ENCODE measurements at regions of chr7 and their contacts with region 1.

Region 1: GRCh38 chr7:139645572-139646523 is 122.4 kb downstream of the CLEC2L start:
- DNase-seq: peak; percentile 87
- H3K4me3 Mint-ChIP-seq: no peak overlapping the region
- H3K27ac Mint-ChIP-seq: no peak overlapping the region
- H3K4me1 Mint-ChIP-seq: peaks cover 49% of the 10 kb centered on the region
- H3K27me3 Mint-ChIP-seq: no peaks in the 10 kb centered on the region

Region 2: DNA sequence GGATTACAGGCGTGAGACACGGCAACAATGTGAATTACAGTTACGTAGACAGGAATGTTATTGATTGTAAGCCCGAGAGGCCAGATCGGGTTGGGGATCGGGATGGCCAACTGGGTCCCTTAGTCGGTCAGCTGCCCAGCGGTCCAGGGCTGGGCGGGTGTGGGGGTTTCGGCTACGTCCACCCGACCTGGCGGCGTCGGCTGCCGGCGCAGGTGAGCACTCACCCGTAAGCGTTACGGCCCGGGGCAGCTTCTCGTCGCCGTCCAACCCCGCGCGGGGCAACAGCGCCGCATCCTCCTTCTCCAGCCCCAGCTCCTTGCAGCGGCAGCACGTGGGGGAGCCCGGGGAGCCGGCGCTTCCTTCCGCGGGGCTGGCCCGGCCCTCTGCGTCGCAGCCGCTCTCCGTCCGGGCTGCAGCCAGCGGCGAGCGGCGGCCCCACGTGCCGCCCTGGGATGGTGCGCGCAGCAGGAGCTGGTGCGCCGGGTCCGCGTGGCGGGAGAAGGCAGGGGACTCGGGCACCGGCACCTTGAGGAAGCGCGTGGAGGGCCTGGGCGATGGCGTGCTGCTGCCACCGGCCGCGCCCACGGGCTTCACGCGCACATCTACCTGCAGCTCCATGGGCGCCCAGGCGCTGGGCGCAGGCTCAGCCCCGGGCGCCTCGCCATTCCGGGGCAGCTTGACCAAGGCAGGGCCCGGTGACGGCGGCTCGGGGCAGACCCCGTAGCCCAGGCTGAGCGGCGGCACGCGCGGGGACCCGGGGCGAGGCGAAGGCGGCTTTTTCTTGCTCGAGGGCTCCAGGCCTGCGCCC is 163.0 kb before region 1 on chr7:
- CTCF ChIA-PET with region 1: no interaction called
- POLR2A ChIA-PET with region 1: no interaction called
- intact Hi-C with region 1: no loop called
- DNase-seq: peak; percentile 29
- H3K4me3 Mint-ChIP-seq: peak overlapping the region; percentile 32
- H3K27ac Mint-ChIP-seq: no peak overlapping the region
- H3K4me1 Mint-ChIP-seq: peaks cover 4% of the 10 kb centered on the region
- H3K27me3 Mint-ChIP-seq: peaks cover 27% of the 10 kb centered on the region

Region 3: GRCh38 chr7:139620676-139621344 is 25.0 kb before region 1 on chr7:
- CTCF ChIA-PET with region 1: interaction called, 30 read pairs
- POLR2A ChIA-PET with region 1: no interaction called
- intact Hi-C with region 1: no loop called
- DNase-seq: peak; percentile 78
- H3K4me3 Mint-ChIP-seq: no peak overlapping the region
- H3K27ac Mint-ChIP-seq: no peak overlapping the region
- H3K4me1 Mint-ChIP-seq: peaks cover 12% of the 10 kb centered on the region
- H3K27me3 Mint-ChIP-seq: no peaks in the 10 kb centered on the region

Region 4: DNA sequence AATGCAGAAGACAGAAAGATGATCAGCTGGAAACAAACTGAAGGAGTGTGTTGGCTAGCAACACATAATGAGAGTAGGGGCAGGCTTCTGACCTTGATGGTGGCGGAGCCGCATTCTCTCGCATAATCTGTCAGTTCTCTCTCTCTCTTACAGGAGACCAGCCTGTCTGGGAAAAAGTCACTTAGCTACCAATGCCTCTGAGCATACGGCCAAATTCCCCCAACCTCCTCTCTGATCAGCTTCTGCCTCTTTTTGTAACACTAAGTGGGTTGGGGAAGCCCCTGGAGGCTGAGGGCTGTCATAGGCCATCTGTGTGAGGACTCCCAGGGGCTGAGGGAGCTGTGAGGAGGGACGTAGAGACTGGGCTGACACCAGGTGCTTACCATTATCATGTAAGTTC is 27.4 kb after region 1 on chr7:
- CTCF ChIA-PET with region 1: interaction called, 26 read pairs
- POLR2A ChIA-PET with region 1: interaction called, 10 read pairs
- intact Hi-C with region 1: loop called (anchors 2 kb)
- DNase-seq: peak; percentile 73
- H3K4me3 Mint-ChIP-seq: peak overlapping the region; percentile 3
- H3K27ac Mint-ChIP-seq: peak overlapping the region; percentile 74
- H3K4me1 Mint-ChIP-seq: peaks cover 40% of the 10 kb centered on the region
- H3K27me3 Mint-ChIP-seq: no peaks in the 10 kb centered on the region

Region 5: GRCh38 chr7:139767561-139767982 is 121.7 kb after region 1 on chr7:
- CTCF ChIA-PET with region 1: interaction called, 34 read pairs
- POLR2A ChIA-PET with region 1: no interaction called
- intact Hi-C with region 1: no loop called
- DNase-seq: no peak
- H3K4me3 Mint-ChIP-seq: no peak overlapping the region
- H3K27ac Mint-ChIP-seq: peak overlapping the region; percentile 70
- H3K4me1 Mint-ChIP-seq: peaks cover 64% of the 10 kb centered on the region
- H3K27me3 Mint-ChIP-seq: no peaks in the 10 kb centered on the region

Region 6: DNA sequence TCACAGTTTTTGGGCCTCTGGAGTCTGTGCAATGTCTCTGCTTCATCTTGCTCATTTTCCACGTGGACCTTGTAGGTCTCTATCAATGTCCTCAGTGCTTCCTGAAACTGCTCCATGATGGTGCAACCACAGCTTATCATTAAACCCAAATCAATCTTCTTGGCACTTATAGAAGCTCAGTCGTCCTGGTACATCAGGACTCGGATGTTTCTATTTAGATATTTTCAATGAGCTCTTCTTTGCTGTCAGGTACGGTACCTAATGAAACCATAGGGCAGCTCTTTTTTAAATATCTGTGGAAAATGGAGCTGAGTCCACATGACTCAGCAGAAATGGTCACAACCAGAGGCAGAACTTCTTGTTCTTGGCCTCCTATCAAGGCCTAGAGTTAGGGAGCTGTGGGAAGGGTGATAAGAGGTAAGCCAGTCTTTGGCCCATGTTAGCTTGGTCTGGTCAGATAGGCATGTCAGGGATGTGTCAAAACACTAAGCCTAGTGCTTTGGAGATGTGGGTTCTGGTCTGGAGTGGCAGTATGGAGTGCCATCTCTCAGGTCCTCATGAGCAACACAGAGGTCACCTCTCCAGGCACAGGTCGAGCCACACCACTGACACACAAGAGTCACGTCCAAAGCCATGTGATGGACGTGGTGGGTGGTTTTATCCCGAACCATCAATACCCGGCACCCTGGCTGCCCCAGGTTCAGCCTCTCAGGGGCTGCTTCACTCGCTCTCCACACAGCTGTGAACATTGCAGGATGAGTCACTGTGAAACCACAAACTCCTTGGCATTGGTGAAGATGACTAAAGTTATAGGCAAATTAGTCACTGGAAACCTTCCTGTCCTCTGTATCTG is 270.2 kb after region 1 on chr7:
- CTCF ChIA-PET with region 1: interaction called, 6 read pairs
- POLR2A ChIA-PET with region 1: interaction called, 3 read pairs
- intact Hi-C with region 1: loop called (anchors 5 kb)
- DNase-seq: peak; percentile 85
- H3K4me3 Mint-ChIP-seq: peak overlapping the region; percentile 24
- H3K27ac Mint-ChIP-seq: peak overlapping the region; percentile 80
- H3K4me1 Mint-ChIP-seq: peaks cover 28% of the 10 kb centered on the region
- H3K27me3 Mint-ChIP-seq: peaks cover 2% of the 10 kb centered on the region

Region 7: GRCh38 chr7:140003913-140004382 is 358.1 kb after region 1 on chr7:
- CTCF ChIA-PET with region 1: interaction called, 200 read pairs
- POLR2A ChIA-PET with region 1: no interaction called
- intact Hi-C with region 1: loop called (anchors 1 kb)
- DNase-seq: peak; percentile 43
- H3K4me3 Mint-ChIP-seq: no peak overlapping the region
- H3K27ac Mint-ChIP-seq: no peak overlapping the region
- H3K4me1 Mint-ChIP-seq: no peaks in the 10 kb centered on the region
- H3K27me3 Mint-ChIP-seq: no peaks in the 10 kb centered on the region

Measured in activated CD4-positive, alpha-beta memory T cell treated with anti-CD3 and anti-CD28 coated beads for 36 hours (primary cell).